Mammary epithelial cell (primary cell): ENCODE measurements at regions of chr9 and their contacts with region 1.

Region 1: GRCh38 chr9:95366731-95367325 is 49.3 kb upstream of the FANCC start:
- DNase-seq: no peak
- H3K4me3 ChIP-seq: no peak overlapping the region
- H3K27ac ChIP-seq: no peak overlapping the region
- H3K4me1 ChIP-seq: no peaks in the 10 kb centered on the region
- H3K27me3 ChIP-seq: peaks cover 2% of the 10 kb centered on the region
- CTCF ChIP-seq: no peak

Region 2: DNA sequence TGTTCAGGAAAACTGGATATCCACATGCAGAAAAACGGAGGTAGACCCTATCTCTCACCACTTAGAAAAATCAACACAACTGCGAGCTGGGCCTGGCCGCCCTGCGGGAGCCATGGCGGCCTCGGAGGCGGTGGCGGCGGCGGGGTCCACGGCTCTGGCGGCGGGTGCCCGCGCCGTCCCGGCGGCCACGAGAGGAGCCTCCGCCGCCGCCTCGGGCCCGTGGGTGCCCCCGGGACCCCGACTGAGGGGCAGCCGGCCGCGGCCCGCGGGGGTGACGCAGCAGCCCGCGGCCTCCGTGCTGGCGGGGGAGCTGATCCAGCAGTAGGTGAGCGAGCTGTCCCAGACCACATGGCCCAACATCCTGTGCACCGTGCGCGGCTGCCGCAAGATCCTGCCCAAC is 74.6 kb before region 1 on chr9:
- CTCF ChIA-PET with region 1: no interaction called
- dilution Hi-C with region 1: loop called (anchors 5 kb)
- in situ Hi-C with region 1: no loop called
- intact Hi-C with region 1: no loop called
- DNase-seq: no peak
- H3K4me3 ChIP-seq: no peak overlapping the region
- H3K27ac ChIP-seq: no peak overlapping the region
- H3K4me1 ChIP-seq: peaks cover 8% of the 10 kb centered on the region
- H3K27me3 ChIP-seq: no peaks in the 10 kb centered on the region
- CTCF ChIP-seq: no peak

Region 3: GRCh38 chr9:95796029-95796428 is 429.2 kb after region 1 on chr9:
- CTCF ChIA-PET with region 1: no interaction called
- dilution Hi-C with region 1: no loop called
- in situ Hi-C with region 1: no loop called
- intact Hi-C with region 1: no loop called
- DNase-seq: no peak
- H3K4me3 ChIP-seq: no peak overlapping the region
- H3K27ac ChIP-seq: no peak overlapping the region
- H3K4me1 ChIP-seq: no peaks in the 10 kb centered on the region
- H3K27me3 ChIP-seq: peaks cover 2% of the 10 kb centered on the region
- CTCF ChIP-seq: no peak